ENCODE measurements at regions of chr4 and their contacts with region 1.

Region 1: DNA sequence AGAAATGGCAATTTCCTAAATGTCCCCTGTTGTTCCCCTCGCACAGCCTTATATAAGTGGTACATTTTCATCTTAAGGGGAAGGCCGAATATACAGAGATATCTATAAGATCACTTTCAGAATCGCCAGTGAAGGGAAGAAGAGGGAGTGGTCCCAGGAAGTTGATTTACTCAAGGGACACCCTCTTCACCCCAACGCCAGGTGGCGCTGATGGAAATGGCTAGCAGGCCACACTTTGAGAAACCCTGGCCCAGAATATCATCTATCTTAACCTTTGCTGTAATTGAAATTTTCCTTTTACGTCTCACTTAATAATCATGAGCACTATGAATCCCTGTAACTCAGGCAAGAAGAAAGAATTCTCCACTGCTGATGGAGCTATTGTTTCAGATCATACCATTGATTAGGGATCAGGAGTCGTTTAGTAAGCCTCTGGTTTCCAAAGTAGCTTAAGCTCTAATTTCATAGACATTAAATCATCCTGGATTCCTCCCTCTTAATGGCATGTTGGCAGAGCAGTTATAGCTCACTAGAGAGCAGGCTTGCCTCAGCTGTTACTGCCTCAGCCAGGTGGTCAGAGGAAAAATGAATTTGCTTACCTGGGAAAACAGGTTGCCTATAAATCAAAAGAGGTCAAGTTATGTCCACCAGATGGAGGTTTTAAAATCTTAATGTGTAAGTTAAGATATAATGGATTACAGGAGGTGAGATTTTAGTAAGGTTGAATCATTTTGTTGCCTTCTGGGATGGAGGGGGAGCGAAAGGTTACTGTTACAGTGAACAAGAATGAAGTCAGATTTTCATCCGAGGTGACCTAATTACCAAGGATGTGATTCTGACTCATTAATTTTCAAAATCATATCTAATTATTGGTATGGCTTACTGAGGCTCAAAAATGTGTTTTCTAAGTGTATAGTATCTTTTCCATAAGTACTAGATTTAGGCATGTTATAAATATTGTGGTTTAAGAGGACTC is 941.2 kb upstream of the TENM3 start:
- DNase-seq: peak; percentile 13 to 78 (median 42)
- ATAC-seq: peak in 3 of 4 donors; percentile 60 to 77 (median 71)
- H3K4me3 ChIP-seq: no peak overlapping the region
- H3K27ac ChIP-seq: no peak overlapping the region
- H3K4me1 ChIP-seq: no peaks in the 10 kb centered on the region
- H3K27me3 ChIP-seq: peaks cover 0 to 3% (median 0%) of the 10 kb centered on the region in 4 donors
- CTCF ChIP-seq: peak; percentile 13 to 47 (median 30)

Region 2: DNA sequence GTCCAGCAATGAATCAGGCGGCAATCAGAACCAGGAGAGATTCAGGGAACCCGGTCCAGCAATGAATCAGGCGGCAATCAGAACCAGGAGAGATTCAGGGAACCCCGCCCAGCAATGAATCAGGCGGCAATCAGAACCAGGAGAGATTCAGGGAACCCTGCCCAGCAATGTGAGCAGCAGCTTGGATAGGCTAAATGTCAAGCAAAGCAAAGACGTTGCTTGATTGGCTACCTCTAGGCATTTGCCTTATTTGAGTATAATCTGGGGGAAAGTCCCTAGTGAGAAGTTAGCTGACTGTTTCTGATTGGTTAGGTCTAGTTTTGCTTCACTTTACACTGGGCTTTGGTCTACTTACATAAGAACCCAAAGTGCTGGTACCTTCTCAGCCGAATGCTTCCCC is 271.1 kb before region 1 on chr4:
- intact Hi-C with region 1: no loop called
- DNase-seq: no peak
- ATAC-seq: no peak
- H3K4me3 ChIP-seq: no peak overlapping the region
- H3K27ac ChIP-seq: no peak overlapping the region
- H3K4me1 ChIP-seq: no peaks in the 10 kb centered on the region
- H3K27me3 ChIP-seq: no peaks in the 10 kb centered on the region
- CTCF ChIP-seq: no peak

Region 3: DNA sequence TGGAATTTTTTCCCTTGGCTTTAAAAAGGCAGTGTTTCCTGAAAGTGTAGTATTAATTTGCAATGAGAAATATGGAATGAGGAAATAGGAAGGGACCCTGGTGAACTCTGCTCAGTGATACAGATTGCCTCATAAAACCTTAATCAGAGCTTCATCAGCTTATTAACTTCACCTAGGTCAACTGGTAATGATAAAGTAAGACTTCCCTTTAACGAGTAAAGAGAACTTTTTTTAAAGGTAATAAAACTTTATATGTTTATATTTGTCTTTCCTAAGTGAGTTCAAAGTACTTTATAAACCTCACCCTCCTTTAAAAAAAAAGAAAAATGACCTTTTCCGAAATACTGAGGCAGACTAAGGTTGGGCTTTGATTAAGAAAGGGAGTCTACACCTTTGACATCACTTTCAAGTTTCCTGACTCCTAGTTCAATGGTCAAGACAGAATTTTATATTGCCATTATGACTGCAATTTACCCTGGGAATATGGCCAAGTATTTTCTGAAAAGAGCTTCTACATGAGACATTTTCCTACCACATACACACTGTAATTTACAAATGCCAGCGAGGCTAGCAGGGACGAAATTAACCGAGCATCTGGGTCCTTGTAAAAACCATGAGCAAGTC is 234.9 kb after region 1 on chr4:
- intact Hi-C with region 1: loop called in 1 of 3 experiments (anchors 10 kb)
- DNase-seq: no peak
- ATAC-seq: peak in 3 of 4 donors; percentile 31 to 66 (median 42)
- H3K4me3 ChIP-seq: no peak overlapping the region
- H3K27ac ChIP-seq: no peak overlapping the region
- H3K4me1 ChIP-seq: no peaks in the 10 kb centered on the region
- H3K27me3 ChIP-seq: no peaks in the 10 kb centered on the region
- CTCF ChIP-seq: no peak